SK-N-SH (cell line): ENCODE measurements at regions of chr13 and their contacts with region 1.

Region 1: DNA sequence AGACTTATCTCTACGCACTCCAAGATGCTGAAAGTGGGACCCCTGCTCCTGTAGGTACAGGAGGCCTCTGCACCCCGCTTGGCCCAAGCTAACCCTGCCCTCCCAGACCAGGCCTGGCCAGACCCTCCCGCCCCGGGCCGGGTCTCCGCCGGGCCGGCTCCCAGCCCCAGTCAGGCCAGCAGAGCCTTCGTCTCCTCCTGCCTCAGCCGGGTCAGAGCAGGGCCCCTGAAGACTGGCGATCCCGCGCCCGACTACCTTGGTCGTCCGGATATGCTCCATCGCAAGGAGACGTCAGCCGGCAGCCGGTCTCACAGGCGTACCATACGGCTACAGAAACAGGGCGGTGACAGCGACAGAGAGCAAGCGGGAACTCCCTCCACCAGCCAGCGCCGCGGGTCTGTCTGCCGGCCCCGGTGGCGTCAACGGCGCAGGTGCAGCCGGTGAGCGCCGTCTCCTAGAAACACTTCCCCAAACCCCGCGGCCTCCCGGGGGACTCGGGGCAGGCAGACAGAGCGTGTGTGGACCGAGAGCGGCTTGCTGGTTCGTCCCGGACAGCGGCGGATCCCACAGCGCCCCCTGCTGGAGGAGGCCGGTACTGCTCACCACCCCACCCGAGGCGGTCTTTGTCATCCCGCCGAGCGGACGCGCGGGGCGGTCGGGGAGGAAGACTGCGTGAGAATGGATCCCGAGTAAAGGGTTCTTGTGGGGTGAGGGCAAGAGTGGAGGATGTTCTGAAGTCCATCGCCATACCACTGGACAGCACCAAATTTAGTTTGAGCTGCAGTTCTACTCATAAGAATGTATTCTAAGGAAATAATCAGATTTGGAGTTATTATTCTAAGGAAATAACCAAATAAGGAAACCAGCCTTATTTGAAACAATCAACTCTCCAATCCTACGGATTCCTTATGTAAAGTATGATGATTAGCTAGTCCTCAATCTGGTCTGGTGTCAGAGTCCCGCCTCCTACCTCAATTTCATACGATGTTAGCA is at the start of gene MTMR6:
- DNase-seq: peak; percentile 95
- H3K4me3 ChIP-seq: peak within 1 kb of the TSS; percentile 96 to 97
- H3K27ac ChIP-seq: peak within 1 kb of the TSS; percentile 74 to 89
- H3K4me1 ChIP-seq: peaks cover 4 to 13% of the 10 kb centered on the region in 2 experiments; a peak in 3 of 4 replicates
- H3K27me3 ChIP-seq: no peaks in the 10 kb centered on the region
- CTCF ChIP-seq: peak; percentile 95
- EP300 ChIP-seq: no peak
- RAD21 ChIP-seq: peak; percentile 32; the same call in 1 of the 2 replicates
- polyA plus RNA-seq, gene MTMR6: 4.8 and 6.7 TPM in 2 replicates

Region 2: GRCh38 chr13:25267715-25268114 is 19.6 kb before region 1 on chr13:
- CTCF ChIA-PET with region 1: interaction called, 28 read pairs
- POLR2A ChIA-PET with region 1: no interaction called
- DNase-seq: peak; percentile 17
- H3K4me3 ChIP-seq: no peak overlapping the region
- H3K27ac ChIP-seq: no peak overlapping the region
- H3K4me1 ChIP-seq: no peaks in the 10 kb centered on the region
- H3K27me3 ChIP-seq: no peaks in the 10 kb centered on the region
- CTCF ChIP-seq: peak; percentile 43
- EP300 ChIP-seq: no peak
- RAD21 ChIP-seq: peak; percentile 49

Region 3: GRCh38 chr13:25301347-25302047 is 14.2 kb after region 1 on chr13 and contains the start of gene NUP58:
- CTCF ChIA-PET with region 1: interaction called, 12 read pairs
- POLR2A ChIA-PET with region 1: no interaction called
- DNase-seq: peak; percentile 92
- H3K4me3 ChIP-seq: peak within 1 kb of the TSS; percentile 90 to 93
- H3K27ac ChIP-seq: peak within 1 kb of the TSS; percentile 90 to 91
- H3K4me1 ChIP-seq: peaks cover 6 to 11% of the 10 kb centered on the region in 2 experiments; a peak in 3 of 4 replicates
- H3K27me3 ChIP-seq: no peaks in the 10 kb centered on the region
- CTCF ChIP-seq: no peak
- EP300 ChIP-seq: no peak
- RAD21 ChIP-seq: no peak
- polyA plus RNA-seq, gene NUP58: 18.1 and 24.5 TPM in 2 replicates